GM13977 (cell line): ENCODE measurements at regions of chr11 and their contacts with region 1.

Region 1: DNA sequence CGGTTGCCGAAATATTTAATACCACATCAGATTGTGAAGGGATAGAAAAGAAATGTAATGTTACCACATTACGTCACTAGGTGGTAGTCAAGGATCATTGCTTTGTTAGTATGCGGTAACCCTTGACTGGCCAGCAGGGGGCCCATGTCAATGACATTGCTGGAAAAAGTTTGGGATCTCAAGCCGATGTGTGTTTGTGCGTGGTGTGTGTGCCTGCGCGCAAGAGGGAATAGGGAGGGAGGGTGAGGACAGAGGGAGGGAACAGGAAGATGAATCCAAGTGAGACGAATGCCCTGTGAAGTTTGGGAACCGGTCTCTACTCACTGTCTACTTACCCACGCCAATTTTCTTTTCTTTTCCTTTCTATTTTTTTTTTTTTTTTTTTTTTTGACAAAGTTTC is 10.7 kb upstream of the MRGPRX2 start:
- DNase-seq: peak; percentile 76
- CTCF ChIP-seq: peak; percentile 93

Region 2: GRCh38 chr11:19553683-19554333 is 482.6 kb after region 1 on chr11:
- in situ Hi-C with region 1: loop called (anchors 25 kb)
- DNase-seq: peak; percentile 66
- CTCF ChIP-seq: peak; percentile 81